IMR-90 (cell line): ENCODE measurements at regions of chr5 and their contacts with region 1.

Region 1: DNA sequence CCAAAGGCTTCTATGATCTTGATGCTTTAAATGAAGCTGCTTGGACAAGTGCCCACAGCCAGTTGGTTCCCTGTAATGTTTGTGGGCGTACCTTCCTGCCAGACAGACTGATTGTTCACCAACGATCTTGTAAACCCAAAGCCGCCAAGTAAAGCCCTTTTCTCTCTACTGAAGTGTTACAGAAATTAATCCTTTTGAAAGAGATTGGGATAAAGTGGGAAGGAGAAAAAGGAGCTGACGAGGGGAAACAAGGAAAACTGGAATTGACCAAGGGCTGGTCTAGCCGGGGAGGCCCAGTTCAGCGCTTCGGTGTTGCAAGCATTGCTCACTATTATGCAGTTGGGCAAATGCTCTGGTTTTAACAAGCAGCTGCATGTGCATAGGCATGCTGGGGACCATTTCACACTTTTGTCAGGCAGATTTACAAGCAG is 53.2 kb downstream of the ZNF474 start:
- DNase-seq: peak; percentile 89
- ATAC-seq: peak; percentile 53
- H3K4me3 ChIP-seq: no peak overlapping the region
- H3K27ac ChIP-seq: peak overlapping the region; percentile 73
- H3K4me1 ChIP-seq: peaks cover 11% of the 10 kb centered on the region
- H3K27me3 ChIP-seq: no peaks in the 10 kb centered on the region
- CTCF ChIP-seq: no peak
- POLR2A ChIP-seq: no peak
- RAD21 ChIP-seq: no peak

Region 2: GRCh38 chr5:122163121-122164069 is 19.1 kb before region 1 on chr5:
- CTCF ChIA-PET with region 1: no interaction called
- POLR2A ChIA-PET with region 1: interaction called, 3 read pairs
- dilution Hi-C with region 1: no loop called
- in situ Hi-C with region 1: no loop called
- intact Hi-C with region 1: loop called (anchors 2 kb)
- DNase-seq: peak; percentile 95
- ATAC-seq: peak; percentile 80
- H3K4me3 ChIP-seq: peak overlapping the region; percentile 6; the same call in 1 of the 2 replicates
- H3K27ac ChIP-seq: peak overlapping the region; percentile 84
- H3K4me1 ChIP-seq: peaks cover 20% of the 10 kb centered on the region
- H3K27me3 ChIP-seq: no peaks in the 10 kb centered on the region
- CTCF ChIP-seq: no peak
- POLR2A ChIP-seq: no peak
- RAD21 ChIP-seq: no peak

Region 3: GRCh38 chr5:122286541-122286940 is 104.0 kb after region 1 on chr5:
- CTCF ChIA-PET with region 1: no interaction called
- POLR2A ChIA-PET with region 1: no interaction called
- dilution Hi-C with region 1: no loop called
- in situ Hi-C with region 1: no loop called
- intact Hi-C with region 1: no loop called
- DNase-seq: no peak
- ATAC-seq: no peak
- H3K4me3 ChIP-seq: no peak overlapping the region
- H3K27ac ChIP-seq: no peak overlapping the region
- H3K4me1 ChIP-seq: peaks cover 5% of the 10 kb centered on the region; the same call in 1 of the 2 replicates
- H3K27me3 ChIP-seq: no peaks in the 10 kb centered on the region
- CTCF ChIP-seq: no peak
- POLR2A ChIP-seq: no peak
- RAD21 ChIP-seq: no peak